ENCODE measurements at regions of chr14 and their contacts with region 1.

Region 1: DNA sequence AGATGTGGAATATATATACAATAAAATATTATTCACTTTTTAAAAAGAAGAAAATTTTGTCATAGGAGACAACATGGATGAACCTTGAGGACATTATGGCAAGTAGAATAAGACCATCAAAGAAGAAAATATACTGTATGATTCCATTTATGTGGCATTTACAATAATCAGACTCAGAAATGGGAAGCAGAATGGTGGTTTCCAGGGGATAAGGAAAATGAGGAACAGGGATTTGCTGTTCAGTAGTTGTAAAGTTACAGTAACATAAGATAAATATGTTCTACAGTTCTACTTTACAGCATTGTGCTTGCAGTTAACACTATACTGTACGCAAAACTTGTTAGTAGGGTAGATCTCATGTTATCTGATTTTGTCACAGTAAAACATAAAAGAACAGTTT is 1271.0 kb downstream of the LRFN5 start:
- DNase-seq: no peak
- H3K4me3 ChIP-seq: no peak overlapping the region
- H3K27ac ChIP-seq: no peak overlapping the region
- H3K4me1 ChIP-seq: no peaks in the 10 kb centered on the region
- H3K27me3 ChIP-seq: no peaks in the 10 kb centered on the region
- CTCF ChIP-seq: no peak
- EP300 ChIP-seq: no peak
- POLR2A ChIP-seq: no peak

Region 2: GRCh38 chr14:42002141-42002540 is 875.6 kb before region 1 on chr14:
- intact Hi-C with region 1: no loop called
- DNase-seq: no peak
- H3K4me3 ChIP-seq: no peak overlapping the region
- H3K27ac ChIP-seq: no peak overlapping the region
- H3K4me1 ChIP-seq: no peaks in the 10 kb centered on the region
- H3K27me3 ChIP-seq: no peaks in the 10 kb centered on the region
- CTCF ChIP-seq: no peak
- EP300 ChIP-seq: no peak
- POLR2A ChIP-seq: no peak

Region 3: GRCh38 chr14:42572032-42572431 is 305.7 kb before region 1 on chr14:
- intact Hi-C with region 1: no loop called
- DNase-seq: no peak
- H3K4me3 ChIP-seq: no peak overlapping the region
- H3K27ac ChIP-seq: no peak overlapping the region
- H3K4me1 ChIP-seq: no peaks in the 10 kb centered on the region
- H3K27me3 ChIP-seq: no peaks in the 10 kb centered on the region
- CTCF ChIP-seq: no peak
- EP300 ChIP-seq: no peak
- POLR2A ChIP-seq: no peak

Region 4: GRCh38 chr14:43123544-43123943 is 245.8 kb after region 1 on chr14:
- intact Hi-C with region 1: no loop called
- DNase-seq: no peak
- H3K4me3 ChIP-seq: no peak overlapping the region
- H3K27ac ChIP-seq: no peak overlapping the region
- H3K4me1 ChIP-seq: no peaks in the 10 kb centered on the region
- H3K27me3 ChIP-seq: no peaks in the 10 kb centered on the region
- CTCF ChIP-seq: no peak
- EP300 ChIP-seq: no peak
- POLR2A ChIP-seq: no peak

Region 5: DNA sequence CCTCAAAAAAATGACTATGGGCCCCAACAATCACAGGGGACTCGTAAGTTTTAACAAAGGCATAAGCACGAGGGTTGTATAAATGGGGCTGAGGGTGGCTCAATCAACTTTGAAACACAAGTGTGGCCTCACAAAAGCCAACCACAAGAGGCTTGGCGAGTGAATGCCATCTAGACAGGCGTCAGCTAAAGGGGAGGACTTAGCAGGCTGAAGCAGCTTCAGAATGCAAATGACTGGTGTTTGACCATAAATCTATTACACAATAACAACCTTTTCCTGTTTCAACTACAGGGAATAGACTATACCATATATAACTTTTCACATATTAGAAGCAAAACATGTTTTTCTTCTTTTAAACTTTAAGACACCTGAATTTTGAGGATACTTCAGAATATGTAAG is 851.4 kb after region 1 on chr14:
- intact Hi-C with region 1: no loop called
- DNase-seq: no peak
- H3K4me3 ChIP-seq: no peak overlapping the region
- H3K27ac ChIP-seq: no peak overlapping the region
- H3K4me1 ChIP-seq: no peaks in the 10 kb centered on the region
- H3K27me3 ChIP-seq: no peaks in the 10 kb centered on the region
- CTCF ChIP-seq: no peak
- EP300 ChIP-seq: no peak
- POLR2A ChIP-seq: no peak

Region 6: GRCh38 chr14:43790708-43791107 is 913.0 kb after region 1 on chr14:
- intact Hi-C with region 1: loop called in 1 of 4 experiments (anchors 5 kb)
- DNase-seq: no peak
- H3K4me3 ChIP-seq: no peak overlapping the region
- H3K27ac ChIP-seq: no peak overlapping the region
- H3K4me1 ChIP-seq: no peaks in the 10 kb centered on the region
- H3K27me3 ChIP-seq: no peaks in the 10 kb centered on the region
- CTCF ChIP-seq: no peak
- EP300 ChIP-seq: no peak
- POLR2A ChIP-seq: no peak